GM12878 (cell line): ENCODE measurements at regions of chr1 and their contacts with region 1.

Region 1: DNA sequence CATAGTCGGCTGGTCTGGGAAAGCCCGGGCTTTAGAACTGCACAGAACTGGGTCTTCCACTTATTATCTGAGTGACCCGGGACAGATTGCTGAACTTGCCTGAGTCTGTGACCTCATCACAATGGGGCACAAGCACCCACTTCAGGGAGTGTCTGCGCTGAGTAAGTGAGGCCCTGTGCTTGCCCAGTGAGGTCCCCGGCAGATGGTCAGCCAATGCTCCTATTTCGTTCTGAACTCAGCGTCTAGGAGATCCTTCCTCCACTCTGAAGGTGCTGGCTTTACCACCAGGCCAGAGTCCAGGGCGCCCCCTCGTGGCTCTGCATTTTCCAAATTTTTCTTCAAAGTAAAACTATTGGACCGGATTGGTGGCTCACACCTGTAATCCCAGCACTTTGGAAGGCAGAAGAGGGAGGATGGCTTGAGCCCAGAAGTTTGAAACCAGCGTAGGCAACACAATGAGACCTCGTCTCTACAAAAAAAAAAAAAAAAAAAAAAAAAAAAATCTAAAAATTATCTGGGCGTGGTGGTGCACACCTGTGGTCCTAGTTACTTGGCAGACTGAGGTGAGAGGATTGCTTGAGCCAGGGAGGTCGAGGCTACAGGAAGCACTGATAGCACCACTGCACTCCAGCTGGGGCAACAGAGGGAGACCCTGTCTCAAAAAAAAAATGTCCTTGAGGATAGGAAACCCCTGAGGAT is 61.7 kb downstream of the FCRL5 start:
- DNase-seq: no peak
- ATAC-seq: peak; percentile 77
- H3K4me3 ChIP-seq: no peak overlapping the region
- H3K27ac ChIP-seq: no peak overlapping the region
- H3K4me1 ChIP-seq: no peaks in the 10 kb centered on the region
- H3K27me3 ChIP-seq: 0 out of 4 replicates have a peak, but pooled peaks cover 0 to 2% of the 10 kb centered on the region in 2 experiments
- CTCF ChIP-seq: peak; percentile 67 to 73 (median 70)
- EP300 ChIP-seq: no peak
- POLR2A ChIP-seq: no peak
- RAD21 ChIP-seq: peak; percentile 67

Region 2: DNA sequence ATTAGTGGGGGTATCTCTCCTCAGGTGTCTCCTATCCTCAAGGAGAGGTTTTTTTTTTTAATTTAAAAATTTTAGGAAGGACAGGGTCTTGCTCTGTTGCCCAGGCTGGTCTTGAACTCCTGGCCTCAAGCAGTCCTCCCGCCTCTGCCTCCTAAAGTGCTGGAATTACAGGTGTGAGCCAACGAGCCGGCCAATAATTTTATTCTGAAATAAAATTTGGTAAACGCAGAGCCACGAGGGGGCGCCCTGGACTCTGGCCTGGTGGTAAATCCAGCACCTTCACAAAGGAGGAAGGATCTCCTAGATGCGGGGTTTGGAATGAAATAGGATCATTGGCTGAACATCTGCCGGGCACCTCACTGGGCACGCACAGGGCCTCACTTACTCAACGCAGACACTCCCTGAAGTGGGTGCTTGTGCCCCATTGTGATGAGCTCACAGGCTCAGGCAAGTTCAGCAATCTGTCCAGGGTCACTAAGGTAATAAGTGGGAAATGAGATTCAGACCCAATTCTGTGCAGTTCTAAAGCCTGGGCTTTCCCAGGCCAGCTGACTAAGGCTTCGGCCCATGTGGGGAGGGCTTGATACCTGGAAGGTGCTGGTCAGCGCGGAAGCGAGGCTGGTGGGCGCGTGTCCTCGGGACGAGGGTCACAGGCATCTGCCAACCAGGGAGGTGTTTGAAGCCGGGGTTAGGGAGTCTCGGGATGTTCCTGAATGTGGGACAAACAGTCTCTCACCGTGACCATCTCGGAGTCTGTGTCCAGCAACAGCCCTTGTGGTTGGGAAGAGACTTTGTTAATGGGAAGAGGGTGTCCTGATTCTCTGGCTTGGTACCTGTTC is 319.7 kb before region 1 on chr1:
- CTCF ChIA-PET with region 1: interaction called, 12 read pairs
- POLR2A ChIA-PET with region 1: no interaction called
- RAD21 ChIA-PET with region 1: interaction called, 6 read pairs
- SMC1A ChIA-PET with region 1: interaction called, 7 read pairs
- in situ Hi-C with region 1: no loop called
- intact Hi-C with region 1: loop called (anchors 2 kb)
- DNase-seq: no peak
- ATAC-seq: no peak; the same call in 2 of the 3 replicates
- H3K4me3 ChIP-seq: no peak overlapping the region
- H3K27ac ChIP-seq: no peak overlapping the region
- H3K4me1 ChIP-seq: peaks cover 43% of the 10 kb centered on the region
- H3K27me3 ChIP-seq: no peaks in the 10 kb centered on the region
- CTCF ChIP-seq: peak; percentile 49 to 67 (median 59)
- EP300 ChIP-seq: no peak
- POLR2A ChIP-seq: no peak
- RAD21 ChIP-seq: peak; percentile 35

Region 3: GRCh38 chr1:157380523-157380922 is 110.1 kb before region 1 on chr1:
- CTCF ChIA-PET with region 1: interaction called, 146 read pairs
- POLR2A ChIA-PET with region 1: interaction called, 6 read pairs
- RAD21 ChIA-PET with region 1: interaction called, 52 read pairs
- SMC1A ChIA-PET with region 1: interaction called, 103 read pairs
- in situ Hi-C with region 1: no loop called
- intact Hi-C with region 1: loop called (anchors 1 kb)
- DNase-seq: no peak
- ATAC-seq: peak; percentile 45
- H3K4me3 ChIP-seq: no peak overlapping the region
- H3K27ac ChIP-seq: no peak overlapping the region
- H3K4me1 ChIP-seq: no peaks in the 10 kb centered on the region
- H3K27me3 ChIP-seq: no peaks in the 10 kb centered on the region; a peak in 1 of 4 replicates
- CTCF ChIP-seq: no peak
- EP300 ChIP-seq: no peak
- POLR2A ChIP-seq: no peak
- RAD21 ChIP-seq: no peak